ENCODE measurements at regions of chr16 and their contacts with region 1.

Region 1: GRCh38 chr16:56317998-56318826 is 107.1 kb downstream of the AMFR start:
- DNase-seq: peak; percentile 90
- H3K4me3 Mint-ChIP-seq: peak overlapping the region; percentile 36
- H3K27ac Mint-ChIP-seq: no peak overlapping the region
- H3K4me1 Mint-ChIP-seq: no peaks in the 10 kb centered on the region
- H3K27me3 Mint-ChIP-seq: peaks cover 71% of the 10 kb centered on the region
- CTCF ChIP-seq: peak; percentile 98

Region 2: GRCh38 chr16:55711959-55712876 is 606.0 kb before region 1 on chr16:
- CTCF ChIA-PET with region 1: no interaction called
- intact Hi-C with region 1: loop called (anchors 1 kb)
- DNase-seq: peak; percentile 77
- H3K4me3 Mint-ChIP-seq: no peak overlapping the region
- H3K27ac Mint-ChIP-seq: no peak overlapping the region
- H3K4me1 Mint-ChIP-seq: no peaks in the 10 kb centered on the region
- H3K27me3 Mint-ChIP-seq: peaks cover 85% of the 10 kb centered on the region
- CTCF ChIP-seq: peak; percentile 69

Region 3: DNA sequence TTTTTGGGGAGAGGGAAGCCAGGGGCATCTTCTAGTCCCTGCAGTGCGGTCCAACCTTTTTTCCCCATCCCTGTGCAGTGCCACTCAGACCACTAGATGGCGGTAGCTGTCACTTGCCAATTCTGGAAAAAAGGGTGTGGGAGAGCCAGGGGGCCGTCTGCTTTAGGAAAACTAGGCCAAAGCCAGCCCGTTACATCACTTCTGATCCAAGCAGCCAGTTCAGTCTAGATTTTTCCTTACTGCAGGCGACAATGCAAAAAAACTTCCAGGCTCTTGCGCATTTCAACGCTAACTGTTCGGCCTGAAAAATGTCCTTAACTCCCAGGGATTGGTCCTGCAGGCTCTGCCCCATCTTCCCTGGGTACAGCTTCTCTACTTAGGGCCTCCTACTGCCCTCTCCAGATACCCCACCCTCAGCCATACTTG is 373.8 kb before region 1 on chr16:
- CTCF ChIA-PET with region 1: interaction called, 9 read pairs
- intact Hi-C with region 1: loop called (anchors 1 kb)
- DNase-seq: peak; percentile 74
- H3K4me3 Mint-ChIP-seq: no peak overlapping the region
- H3K27ac Mint-ChIP-seq: no peak overlapping the region
- H3K4me1 Mint-ChIP-seq: peaks cover 8% of the 10 kb centered on the region
- H3K27me3 Mint-ChIP-seq: peaks cover 34% of the 10 kb centered on the region
- CTCF ChIP-seq: peak; percentile 93

Region 4: GRCh38 chr16:56041686-56042085 is 276.5 kb before region 1 on chr16:
- CTCF ChIA-PET with region 1: no interaction called
- intact Hi-C with region 1: loop called (anchors 1 kb)
- DNase-seq: peak; percentile 53
- H3K4me3 Mint-ChIP-seq: no peak overlapping the region
- H3K27ac Mint-ChIP-seq: no peak overlapping the region
- H3K4me1 Mint-ChIP-seq: no peaks in the 10 kb centered on the region
- H3K27me3 Mint-ChIP-seq: peaks cover 21% of the 10 kb centered on the region
- CTCF ChIP-seq: peak; percentile 32

Region 5: DNA sequence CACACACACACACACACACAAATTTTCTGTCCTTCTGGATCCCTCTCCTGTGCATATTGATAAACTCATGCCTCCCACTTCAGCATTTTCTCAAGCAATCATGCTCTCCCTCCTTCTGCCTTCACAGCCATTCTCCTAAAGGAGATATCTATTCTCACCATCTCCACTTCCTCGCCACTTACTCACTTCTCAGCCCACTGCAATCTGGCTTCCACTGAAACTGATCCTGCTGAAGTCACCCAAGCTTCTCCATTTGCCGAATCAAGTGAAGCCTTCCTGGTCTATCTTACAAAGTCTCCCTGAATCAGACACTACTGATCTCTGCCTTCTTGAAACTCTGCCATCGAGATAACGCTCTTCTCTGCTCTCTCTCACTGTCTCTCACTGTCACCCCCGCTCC is 180.9 kb before region 1 on chr16:
- CTCF ChIA-PET with region 1: no interaction called
- intact Hi-C with region 1: loop called (anchors 10 kb)
- DNase-seq: no peak
- H3K4me3 Mint-ChIP-seq: no peak overlapping the region
- H3K27ac Mint-ChIP-seq: no peak overlapping the region
- H3K4me1 Mint-ChIP-seq: peaks cover 9% of the 10 kb centered on the region
- H3K27me3 Mint-ChIP-seq: peaks cover 18% of the 10 kb centered on the region
- CTCF ChIP-seq: no peak

Region 6: GRCh38 chr16:56246051-56246817 is 72.0 kb before region 1 on chr16:
- CTCF ChIA-PET with region 1: no interaction called
- intact Hi-C with region 1: loop called (anchors 5 kb)
- DNase-seq: no peak
- H3K4me3 Mint-ChIP-seq: no peak overlapping the region
- H3K27ac Mint-ChIP-seq: no peak overlapping the region
- H3K4me1 Mint-ChIP-seq: no peaks in the 10 kb centered on the region
- H3K27me3 Mint-ChIP-seq: peaks cover 56% of the 10 kb centered on the region
- CTCF ChIP-seq: no peak

Measured in Calu3 (cell line).